PC-9 (cell line): ENCODE measurements at regions of chr7 and their contacts with region 1.

Region 1: GRCh38 chr7:151687523-151688218 is 168.0 kb upstream of the RHEB start:
- DNase-seq: peak; percentile 99 to 100
- H3K4me3 ChIP-seq: no peak overlapping the region
- H3K27ac ChIP-seq: peak overlapping the region; percentile 84
- H3K4me1 ChIP-seq: peaks cover 53% of the 10 kb centered on the region
- H3K27me3 ChIP-seq: no peaks in the 10 kb centered on the region
- CTCF ChIP-seq: no peak

Region 2: DNA sequence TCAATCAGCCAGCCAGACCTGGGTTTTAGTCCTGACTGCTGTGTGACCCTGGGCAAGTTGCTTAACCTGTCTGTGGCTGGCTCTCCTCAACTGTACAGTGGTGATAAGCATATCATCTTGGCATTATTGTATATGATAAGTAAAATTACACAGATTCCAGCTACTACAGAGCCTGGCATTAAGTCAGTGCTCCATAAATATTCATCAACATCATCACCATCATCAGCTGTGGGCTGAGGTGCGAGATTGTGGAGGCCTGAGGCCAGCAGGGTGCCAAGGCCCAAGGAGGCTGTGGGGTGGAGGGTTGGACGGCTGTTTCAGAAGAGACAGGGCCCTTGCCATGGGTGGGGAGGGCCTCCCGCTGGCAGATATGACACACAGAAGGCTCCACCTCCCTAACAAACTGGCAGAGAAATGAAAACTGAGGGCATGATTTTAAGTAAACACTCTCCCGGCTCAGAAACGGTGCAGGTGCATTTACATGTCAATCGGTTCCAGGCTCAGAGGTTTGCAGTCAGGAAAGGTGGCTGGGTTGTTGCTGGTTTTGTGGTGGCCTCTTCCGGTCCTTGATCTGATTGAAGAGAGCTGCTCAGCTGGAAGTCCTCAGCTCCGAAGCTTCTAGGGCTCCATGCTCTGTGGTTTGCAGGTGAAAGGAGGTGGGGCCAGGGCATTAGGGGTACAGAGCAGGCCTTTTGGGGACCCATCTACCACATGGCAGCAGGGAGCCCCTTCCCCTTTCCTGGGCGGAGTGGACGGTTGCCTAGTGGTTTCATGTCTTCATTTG is 257.9 kb before region 1 on chr7:
- CTCF ChIA-PET with region 1: no interaction called
- POLR2A ChIA-PET with region 1: no interaction called
- intact Hi-C with region 1: loop called (anchors 5 kb)
- DNase-seq: peak; percentile 52 to 55
- H3K4me3 ChIP-seq: no peak overlapping the region
- H3K27ac ChIP-seq: peak overlapping the region; percentile 55
- H3K4me1 ChIP-seq: peaks cover 44% of the 10 kb centered on the region
- H3K27me3 ChIP-seq: no peaks in the 10 kb centered on the region
- CTCF ChIP-seq: no peak

Region 3: GRCh38 chr7:151570366-151570915 is 117.2 kb before region 1 on chr7:
- CTCF ChIA-PET with region 1: no interaction called
- POLR2A ChIA-PET with region 1: no interaction called
- intact Hi-C with region 1: loop called (anchors 5 kb)
- DNase-seq: no peak
- H3K4me3 ChIP-seq: no peak overlapping the region
- H3K27ac ChIP-seq: no peak overlapping the region
- H3K4me1 ChIP-seq: no peaks in the 10 kb centered on the region
- H3K27me3 ChIP-seq: no peaks in the 10 kb centered on the region
- CTCF ChIP-seq: peak; percentile 86

Region 4: GRCh38 chr7:151599401-151600227 is 88.1 kb before region 1 on chr7:
- CTCF ChIA-PET with region 1: interaction called, 3 read pairs
- POLR2A ChIA-PET with region 1: interaction called, 3 read pairs
- intact Hi-C with region 1: loop called (anchors 2 kb)
- DNase-seq: peak; percentile 69 to 93
- H3K4me3 ChIP-seq: peak overlapping the region; percentile 28; the same call in 1 of the 2 replicates
- H3K27ac ChIP-seq: peak overlapping the region; percentile 76
- H3K4me1 ChIP-seq: peaks cover 71% of the 10 kb centered on the region
- H3K27me3 ChIP-seq: no peaks in the 10 kb centered on the region
- CTCF ChIP-seq: no peak

Region 5: GRCh38 chr7:151727579-151728285 is 40.1 kb after region 1 on chr7:
- CTCF ChIA-PET with region 1: no interaction called
- POLR2A ChIA-PET with region 1: no interaction called
- intact Hi-C with region 1: loop called (anchors 2 kb)
- DNase-seq: peak; percentile 97 to 100
- H3K4me3 ChIP-seq: peak overlapping the region; percentile 39; the same call in 1 of the 2 replicates
- H3K27ac ChIP-seq: peak overlapping the region; percentile 56
- H3K4me1 ChIP-seq: peaks cover 26% of the 10 kb centered on the region
- H3K27me3 ChIP-seq: no peaks in the 10 kb centered on the region
- CTCF ChIP-seq: no peak

Region 6: GRCh38 chr7:151744656-151745638 is 57.3 kb after region 1 on chr7:
- CTCF ChIA-PET with region 1: interaction called, 3 read pairs
- POLR2A ChIA-PET with region 1: no interaction called
- intact Hi-C with region 1: loop called (anchors 2 kb)
- DNase-seq: peak; percentile 96 to 100
- H3K4me3 ChIP-seq: no peak overlapping the region; the same call in 1 of the 2 replicates
- H3K27ac ChIP-seq: peak overlapping the region; percentile 81
- H3K4me1 ChIP-seq: peaks cover 44% of the 10 kb centered on the region
- H3K27me3 ChIP-seq: no peaks in the 10 kb centered on the region
- CTCF ChIP-seq: peak; percentile 70

Region 7: DNA sequence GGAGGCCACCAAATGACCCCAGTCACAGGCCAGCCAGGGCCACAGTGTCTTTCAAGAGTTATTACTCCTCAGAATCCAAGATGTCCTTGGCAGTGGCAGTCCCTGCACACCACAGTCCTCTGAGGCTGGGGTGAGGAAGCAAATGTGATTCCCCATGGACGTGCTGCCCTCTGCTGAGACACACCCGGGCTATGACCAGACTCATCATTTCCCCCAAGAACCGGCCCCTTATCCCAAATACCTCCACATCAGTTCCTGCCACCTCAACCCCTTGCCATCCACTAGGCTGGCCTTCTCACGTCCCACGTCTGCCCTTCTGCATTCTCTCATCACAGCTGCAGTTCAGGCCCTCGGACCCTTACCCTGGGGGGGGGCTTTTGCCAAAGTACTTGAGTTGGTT is 184.2 kb after region 1 on chr7:
- CTCF ChIA-PET with region 1: no interaction called
- POLR2A ChIA-PET with region 1: no interaction called
- intact Hi-C with region 1: no loop called
- DNase-seq: peak in 1 of 2 experiments; percentile 20
- H3K4me3 ChIP-seq: no peak overlapping the region
- H3K27ac ChIP-seq: no peak overlapping the region
- H3K4me1 ChIP-seq: peaks cover 6% of the 10 kb centered on the region; the same call in 1 of the 2 replicates
- H3K27me3 ChIP-seq: peaks cover 8% of the 10 kb centered on the region; the same call in 1 of the 2 replicates
- CTCF ChIP-seq: peak; percentile 42; the same call in 1 of the 2 replicates

Region 8: DNA sequence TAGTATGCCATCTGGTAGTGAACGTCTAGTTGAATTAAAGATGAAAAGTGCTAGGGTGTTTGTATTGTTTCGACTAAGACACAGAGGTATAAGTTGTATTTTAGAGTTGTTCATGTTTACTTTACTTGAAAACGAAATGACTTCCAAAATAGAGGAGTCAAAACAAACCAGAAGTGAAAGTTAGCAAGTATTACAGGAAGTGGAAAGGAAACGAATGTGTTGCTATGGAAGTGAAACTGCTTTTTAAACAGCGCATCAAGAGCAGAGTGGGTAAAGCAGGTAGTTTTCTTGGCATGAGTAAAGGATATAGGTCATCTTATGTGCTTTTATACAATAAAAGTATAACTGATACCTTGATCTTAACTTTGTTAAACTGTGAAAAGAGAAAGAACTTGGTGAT is 248.5 kb after region 1 on chr7:
- CTCF ChIA-PET with region 1: no interaction called
- POLR2A ChIA-PET with region 1: no interaction called
- intact Hi-C with region 1: loop called (anchors 2 kb)
- DNase-seq: no peak
- H3K4me3 ChIP-seq: no peak overlapping the region
- H3K27ac ChIP-seq: no peak overlapping the region
- H3K4me1 ChIP-seq: peaks cover 29% of the 10 kb centered on the region
- H3K27me3 ChIP-seq: peaks cover 5% of the 10 kb centered on the region; the same call in 1 of the 2 replicates
- CTCF ChIP-seq: no peak